CD8-positive, alpha-beta memory T cell (primary cell): ENCODE measurements at regions of chr1 and their contacts with region 1.

Region 1: GRCh38 chr1:9651565-9652378 is at the start of gene PIK3CD:
- DNase-seq: peak in 4 of 5 donors; percentile 23 to 52 (median 38)
- H3K4me3 ChIP-seq: peak within 1 kb of the TSS; percentile 91
- H3K4me3 Mint-ChIP-seq: peak within 1 kb of the TSS; percentile 97 to 100 (median 100)
- H3K27ac ChIP-seq: peak within 1 kb of the TSS; percentile 69
- H3K27ac Mint-ChIP-seq: peak within 1 kb of the TSS; percentile 85 to 100 (median 98)
- H3K4me1 ChIP-seq: peaks cover 65% of the 10 kb centered on the region
- H3K4me1 Mint-ChIP-seq: peaks cover 50 to 66% (median 54%) of the 10 kb centered on the region in 3 donors
- H3K27me3 ChIP-seq: no peaks in the 10 kb centered on the region
- H3K27me3 Mint-ChIP-seq: peaks cover 0 to 3% of the 10 kb centered on the region in 2 donors
- total RNA-seq, gene PIK3CD: 157 to 165 TPM

Region 2: GRCh38 chr1:9665193-9665592 is 13.4 kb after region 1 on chr1:
- CTCF ChIA-PET with region 1: interaction called, 35 read pairs
- POLR2A ChIA-PET with region 1: interaction called, 10 read pairs
- DNase-seq: no peak
- H3K4me3 ChIP-seq: no peak overlapping the region
- H3K4me3 Mint-ChIP-seq: peak overlapping the region in 1 of 7 donors; percentile 34
- H3K27ac ChIP-seq: no peak overlapping the region
- H3K27ac Mint-ChIP-seq: peak overlapping the region; percentile 39 to 85 (median 68)
- H3K4me1 ChIP-seq: peaks cover 33% of the 10 kb centered on the region
- H3K4me1 Mint-ChIP-seq: peaks cover 46 to 74% (median 61%) of the 10 kb centered on the region in 3 donors
- H3K27me3 ChIP-seq: no peaks in the 10 kb centered on the region
- H3K27me3 Mint-ChIP-seq: no peaks in the 10 kb centered on the region

Region 3: DNA sequence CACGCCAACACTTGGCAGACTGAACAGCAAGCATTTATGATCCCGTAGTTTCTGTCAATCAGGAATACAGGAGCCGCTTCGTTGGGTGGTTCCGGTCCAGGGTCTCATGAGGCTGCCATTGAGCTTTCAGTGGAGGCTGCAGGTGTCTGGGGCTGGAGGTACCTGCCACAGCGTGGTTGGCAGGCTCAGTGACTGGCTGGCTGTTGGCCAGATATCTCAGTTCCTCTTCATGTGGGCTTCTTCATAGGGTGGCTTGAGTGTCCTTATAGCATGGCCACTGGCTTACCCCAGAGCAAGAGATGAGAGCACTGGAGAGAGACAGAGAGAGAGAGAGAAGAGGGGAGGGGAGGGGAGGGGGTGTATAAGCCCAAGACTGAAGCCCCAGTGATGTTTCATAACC is 29.1 kb after region 1 on chr1:
- CTCF ChIA-PET with region 1: interaction called, 28 read pairs
- POLR2A ChIA-PET with region 1: interaction called, 14 read pairs
- DNase-seq: no peak
- H3K4me3 ChIP-seq: no peak overlapping the region
- H3K4me3 Mint-ChIP-seq: peak overlapping the region in 1 of 7 donors; percentile 44
- H3K27ac ChIP-seq: no peak overlapping the region
- H3K27ac Mint-ChIP-seq: peak overlapping the region in 7 of 8 donors; percentile 37 to 78 (median 68)
- H3K4me1 ChIP-seq: peaks cover 62% of the 10 kb centered on the region
- H3K4me1 Mint-ChIP-seq: peaks cover 50 to 76% (median 73%) of the 10 kb centered on the region in 3 donors
- H3K27me3 ChIP-seq: no peaks in the 10 kb centered on the region
- H3K27me3 Mint-ChIP-seq: no peaks in the 10 kb centered on the region

Region 4: GRCh38 chr1:9689011-9689706 is 37.4 kb after region 1 on chr1:
- CTCF ChIA-PET with region 1: interaction called, 28 read pairs
- POLR2A ChIA-PET with region 1: interaction called, 24 read pairs
- DNase-seq: peak; percentile 77 to 88 (median 80)
- H3K4me3 ChIP-seq: peak overlapping the region; percentile 81
- H3K4me3 Mint-ChIP-seq: peak overlapping the region; percentile 77 to 92 (median 82)
- H3K27ac ChIP-seq: peak overlapping the region; percentile 51
- H3K27ac Mint-ChIP-seq: peak overlapping the region in 6 of 8 donors; percentile 42 to 95 (median 88)
- H3K4me1 ChIP-seq: peaks cover 64% of the 10 kb centered on the region
- H3K4me1 Mint-ChIP-seq: peaks cover 61 to 80% (median 76%) of the 10 kb centered on the region in 3 donors
- H3K27me3 ChIP-seq: no peaks in the 10 kb centered on the region
- H3K27me3 Mint-ChIP-seq: no peaks in the 10 kb centered on the region

Region 5: GRCh38 chr1:9711466-9712020 is 59.8 kb after region 1 on chr1:
- CTCF ChIA-PET with region 1: interaction called, 33 read pairs
- POLR2A ChIA-PET with region 1: interaction called, 98 read pairs
- DNase-seq: peak in 1 of 5 donors; percentile 50
- H3K4me3 ChIP-seq: no peak overlapping the region
- H3K4me3 Mint-ChIP-seq: peak overlapping the region in 2 of 7 donors; percentile 23 to 60
- H3K27ac ChIP-seq: no peak overlapping the region
- H3K27ac Mint-ChIP-seq: peak overlapping the region; percentile 26 to 93 (median 76)
- H3K4me1 ChIP-seq: peaks cover 51% of the 10 kb centered on the region
- H3K4me1 Mint-ChIP-seq: peaks cover 37 to 71% (median 41%) of the 10 kb centered on the region in 3 donors
- H3K27me3 ChIP-seq: no peaks in the 10 kb centered on the region
- H3K27me3 Mint-ChIP-seq: no peaks in the 10 kb centered on the region

Region 6: GRCh38 chr1:9717193-9718005 is 65.6 kb after region 1 on chr1:
- CTCF ChIA-PET with region 1: interaction called, 33 read pairs
- POLR2A ChIA-PET with region 1: interaction called, 98 read pairs
- DNase-seq: peak; percentile 80 to 95 (median 91)
- H3K4me3 ChIP-seq: peak overlapping the region; percentile 89
- H3K4me3 Mint-ChIP-seq: peak overlapping the region; percentile 90 to 98 (median 95)
- H3K27ac ChIP-seq: peak overlapping the region; percentile 81
- H3K27ac Mint-ChIP-seq: peak overlapping the region; percentile 88 to 98 (median 94)
- H3K4me1 ChIP-seq: peaks cover 92% of the 10 kb centered on the region
- H3K4me1 Mint-ChIP-seq: peaks cover 37 to 79% (median 43%) of the 10 kb centered on the region in 3 donors
- H3K27me3 ChIP-seq: no peaks in the 10 kb centered on the region
- H3K27me3 Mint-ChIP-seq: peaks cover 0 to 3% of the 10 kb centered on the region in 2 donors